CD14-positive monocyte (primary cell): ENCODE measurements at regions of chr1 and their contacts with region 1.

Region 1: DNA sequence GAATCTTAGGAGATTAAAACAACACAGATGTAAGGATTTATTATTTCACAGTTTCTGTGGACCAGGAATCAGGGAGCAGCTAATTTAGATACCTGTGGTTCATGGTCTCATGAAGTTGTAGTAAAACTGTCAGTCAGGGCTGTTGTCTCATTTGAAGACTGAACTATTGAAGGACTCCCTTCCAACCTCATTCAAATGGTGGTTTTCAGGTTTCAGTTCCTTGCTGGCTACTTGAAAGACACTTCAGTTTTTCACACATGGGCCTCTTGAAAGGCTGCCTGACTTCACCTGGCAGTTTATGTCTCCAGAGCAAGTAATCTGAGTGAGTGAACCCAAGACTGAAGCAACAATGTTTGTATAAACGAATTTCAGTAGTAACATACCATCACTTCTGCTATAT is 915.9 kb downstream of the PLA2G4A start:
- DNase-seq: no peak
- H3K4me3 ChIP-seq: no peak overlapping the region
- H3K4me3 Mint-ChIP-seq: no peak overlapping the region
- H3K27ac ChIP-seq: no peak overlapping the region
- H3K27ac Mint-ChIP-seq: no peak overlapping the region
- H3K4me1 ChIP-seq: no peaks in the 10 kb centered on the region
- H3K4me1 Mint-ChIP-seq: no peaks in the 10 kb centered on the region
- H3K27me3 ChIP-seq: no peaks in the 10 kb centered on the region
- H3K27me3 Mint-ChIP-seq: peaks cover 0 to 2% (median 0%) of the 10 kb centered on the region in 3 donors
- CTCF ChIP-seq: no peak

Region 2: DNA sequence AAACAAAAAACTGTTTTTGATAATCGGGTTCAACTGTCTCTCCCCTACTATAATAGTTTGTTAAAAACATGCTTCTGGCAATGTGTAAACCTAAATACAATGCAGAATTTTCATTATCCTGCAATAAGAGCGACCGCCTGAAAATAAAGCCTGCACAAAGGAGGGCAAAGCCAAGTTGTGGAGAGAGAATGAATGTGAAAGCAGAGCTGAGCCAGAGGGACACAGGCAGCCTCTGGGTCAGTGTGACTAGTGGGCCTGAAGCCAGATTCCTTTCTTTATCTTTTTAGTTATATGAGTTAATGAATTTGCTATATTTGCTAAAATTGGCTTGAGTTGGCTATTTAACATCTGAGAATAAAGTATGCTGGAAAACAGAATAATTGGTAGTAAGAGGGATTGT is 300.7 kb before region 1 on chr1:
- intact Hi-C with region 1: no loop called
- DNase-seq: no peak
- H3K4me3 ChIP-seq: no peak overlapping the region
- H3K4me3 Mint-ChIP-seq: no peak overlapping the region
- H3K27ac ChIP-seq: no peak overlapping the region
- H3K27ac Mint-ChIP-seq: no peak overlapping the region
- H3K4me1 ChIP-seq: no peaks in the 10 kb centered on the region
- H3K4me1 Mint-ChIP-seq: no peaks in the 10 kb centered on the region
- H3K27me3 ChIP-seq: no peaks in the 10 kb centered on the region
- H3K27me3 Mint-ChIP-seq: peaks cover 0 to 2% (median 0%) of the 10 kb centered on the region in 3 donors
- CTCF ChIP-seq: no peak

Region 3: GRCh38 chr1:187755536-187755935 is 10.9 kb after region 1 on chr1:
- intact Hi-C with region 1: loop called in 1 of 2 experiments (anchors 1 kb)
- DNase-seq: no peak
- H3K4me3 ChIP-seq: no peak overlapping the region
- H3K4me3 Mint-ChIP-seq: no peak overlapping the region
- H3K27ac ChIP-seq: no peak overlapping the region
- H3K27ac Mint-ChIP-seq: no peak overlapping the region
- H3K4me1 ChIP-seq: no peaks in the 10 kb centered on the region
- H3K4me1 Mint-ChIP-seq: no peaks in the 10 kb centered on the region
- H3K27me3 ChIP-seq: no peaks in the 10 kb centered on the region
- H3K27me3 Mint-ChIP-seq: no peaks in the 10 kb centered on the region
- CTCF ChIP-seq: no peak